CD4-positive, alpha-beta memory T cell (primary cell): ENCODE measurements at regions of chr18 and their contacts with region 1.

Region 1: DNA sequence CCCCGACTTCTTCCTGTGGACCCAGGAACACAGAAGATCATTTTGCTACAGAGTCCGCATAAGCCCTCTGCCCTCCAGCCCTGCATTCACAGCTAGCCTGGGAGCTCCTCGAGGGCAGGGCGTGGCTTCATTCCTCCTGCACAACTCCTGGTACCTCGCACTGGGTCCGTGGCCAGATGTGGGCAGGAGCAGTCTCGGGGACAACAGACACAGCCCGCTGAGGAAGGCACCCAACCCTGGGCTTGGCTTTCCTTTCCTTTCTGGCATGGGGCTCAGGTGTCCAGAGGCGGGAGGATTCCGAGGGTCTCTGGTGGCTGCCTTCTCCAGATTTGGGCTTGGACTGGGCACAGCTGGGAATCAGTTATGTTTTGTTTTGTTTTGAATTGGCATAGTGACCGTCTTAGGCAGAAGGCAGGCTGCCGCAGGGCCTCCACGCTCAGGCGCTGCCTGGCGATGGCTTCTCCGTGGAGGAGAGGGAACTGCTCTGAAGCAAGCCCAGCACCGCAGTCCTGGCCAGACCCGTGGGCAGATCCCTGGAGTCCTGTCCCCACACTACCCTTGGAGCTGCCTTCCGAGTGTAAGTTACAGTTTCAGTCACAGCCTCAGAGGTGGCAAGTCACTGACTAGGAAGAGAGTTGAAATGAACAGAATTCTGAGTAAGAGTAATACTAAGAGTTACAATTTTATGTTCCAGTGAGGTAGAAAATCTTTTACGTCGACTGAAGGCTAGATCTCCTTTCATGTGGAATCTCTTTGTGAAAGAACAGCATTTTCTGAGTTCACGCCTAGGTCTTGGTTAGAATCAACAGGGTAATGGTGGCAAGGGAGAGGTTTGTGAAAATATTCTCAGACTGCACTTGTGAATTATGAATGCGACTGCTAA is 47.9 kb downstream of the LDLRAD4 start:
- DNase-seq: peak in 4 of 5 donors; percentile 34 to 48 (median 42)
- H3K4me3 ChIP-seq: peak overlapping the region; percentile 6 to 57
- H3K4me3 Mint-ChIP-seq: peak overlapping the region; percentile 60 to 85 (median 76)
- H3K27ac ChIP-seq: peak overlapping the region; percentile 50
- H3K27ac Mint-ChIP-seq: peak overlapping the region; percentile 77 to 96 (median 93)
- H3K4me1 ChIP-seq: peaks cover 50% of the 10 kb centered on the region
- H3K4me1 Mint-ChIP-seq: peaks cover 33 to 65% (median 51%) of the 10 kb centered on the region in 4 donors
- H3K27me3 ChIP-seq: no peaks in the 10 kb centered on the region
- H3K27me3 Mint-ChIP-seq: peaks cover 0 to 7% of the 10 kb centered on the region in 2 donors

Region 2: DNA sequence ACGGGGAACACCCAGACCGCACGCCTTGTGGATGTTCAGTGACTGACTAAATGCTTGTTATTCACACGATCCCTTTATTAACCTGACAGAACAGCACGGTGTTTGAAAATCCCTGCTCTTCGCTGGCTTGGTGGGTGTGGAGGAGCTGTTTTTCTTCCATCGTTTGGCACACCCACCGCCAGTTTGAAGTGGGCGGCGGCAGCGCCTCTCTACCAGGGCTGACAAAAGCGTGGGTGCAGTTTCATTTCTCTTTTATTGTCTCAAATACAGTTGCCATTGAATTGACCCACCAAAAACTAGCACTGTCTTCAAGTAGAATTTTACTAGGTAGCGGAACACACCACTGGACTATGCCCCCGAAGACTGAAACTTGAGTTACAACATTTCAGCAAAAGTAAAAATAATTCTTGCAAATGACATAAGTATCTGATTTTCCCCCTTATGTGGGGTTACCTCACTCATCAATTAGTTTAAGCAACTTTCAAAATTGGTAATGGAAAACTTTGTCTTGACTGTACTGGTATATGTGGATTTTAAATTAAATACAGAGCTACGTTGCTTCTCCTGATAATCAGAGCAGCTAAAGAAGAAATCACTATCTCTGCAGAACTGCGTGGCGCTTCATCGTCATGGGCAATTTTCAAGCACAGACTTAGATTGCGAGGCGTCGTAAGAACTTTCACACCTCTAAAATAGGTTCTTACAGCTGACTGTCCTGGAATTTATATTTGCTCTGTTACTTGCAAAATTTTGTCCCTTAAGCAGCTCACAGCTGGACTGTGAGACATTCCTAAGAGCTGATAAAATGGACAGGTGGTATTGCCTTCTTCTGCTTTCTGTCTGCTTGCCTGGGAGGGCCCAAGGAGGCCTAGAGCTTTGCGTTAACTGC is 13.0 kb after region 1 on chr18:
- CTCF ChIA-PET with region 1: interaction called, 4 read pairs
- POLR2A ChIA-PET with region 1: interaction called, 23 read pairs
- intact Hi-C with region 1: loop called (anchors 1 kb)
- DNase-seq: peak in 3 of 5 donors; percentile 37 to 51 (median 41)
- H3K4me3 ChIP-seq: peak overlapping the region; percentile 7 to 46
- H3K4me3 Mint-ChIP-seq: peak overlapping the region; percentile 81 to 93 (median 88)
- H3K27ac ChIP-seq: peak overlapping the region; percentile 53
- H3K27ac Mint-ChIP-seq: peak overlapping the region; percentile 82 to 98 (median 94)
- H3K4me1 ChIP-seq: peaks cover 80% of the 10 kb centered on the region
- H3K4me1 Mint-ChIP-seq: peaks cover 48 to 88% (median 72%) of the 10 kb centered on the region in 4 donors
- H3K27me3 ChIP-seq: no peaks in the 10 kb centered on the region
- H3K27me3 Mint-ChIP-seq: peaks cover 0 to 2% of the 10 kb centered on the region in 2 donors

Region 3: GRCh38 chr18:13435596-13436327 is 169.3 kb after region 1 on chr18:
- CTCF ChIA-PET with region 1: no interaction called
- POLR2A ChIA-PET with region 1: no interaction called
- intact Hi-C with region 1: no loop called
- DNase-seq: peak in 2 of 5 donors; percentile 15 to 53
- H3K4me3 ChIP-seq: no peak overlapping the region
- H3K4me3 Mint-ChIP-seq: peak overlapping the region in 5 of 8 donors; percentile 30 to 89 (median 67)
- H3K27ac ChIP-seq: no peak overlapping the region
- H3K27ac Mint-ChIP-seq: peak overlapping the region; percentile 79 to 97 (median 95)
- H3K4me1 ChIP-seq: peaks cover 50% of the 10 kb centered on the region
- H3K4me1 Mint-ChIP-seq: peaks cover 36 to 58% (median 50%) of the 10 kb centered on the region in 4 donors
- H3K27me3 ChIP-seq: no peaks in the 10 kb centered on the region
- H3K27me3 Mint-ChIP-seq: no peaks in the 10 kb centered on the region

Region 4: DNA sequence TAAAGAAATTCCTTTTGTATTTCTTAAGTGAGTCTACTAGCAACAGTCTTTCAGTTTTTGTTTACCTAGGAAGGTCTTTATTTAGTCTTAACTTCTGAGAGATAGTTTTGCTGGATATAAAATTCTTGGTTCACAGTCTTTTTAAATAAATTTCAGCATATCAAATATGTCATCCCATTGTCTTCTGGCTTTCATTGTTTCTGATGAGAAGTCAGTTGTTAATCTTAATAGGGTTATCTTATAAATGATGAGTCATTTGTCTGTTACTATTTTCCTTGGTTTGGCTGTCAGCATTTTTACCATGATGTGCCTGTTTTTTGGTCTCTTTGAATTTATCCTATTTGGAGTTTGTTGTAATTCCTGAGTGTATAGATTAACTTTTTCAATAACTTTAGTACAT is 330.6 kb after region 1 on chr18:
- CTCF ChIA-PET with region 1: no interaction called
- POLR2A ChIA-PET with region 1: no interaction called
- intact Hi-C with region 1: no loop called
- DNase-seq: no peak
- H3K4me3 ChIP-seq: no peak overlapping the region
- H3K4me3 Mint-ChIP-seq: no peak overlapping the region
- H3K27ac ChIP-seq: no peak overlapping the region
- H3K27ac Mint-ChIP-seq: peak overlapping the region in 1 of 7 donors; percentile 10
- H3K4me1 ChIP-seq: peaks cover under 1% of the 10 kb centered on the region
- H3K4me1 Mint-ChIP-seq: peaks cover 3 to 11% (median 6%) of the 10 kb centered on the region in 4 donors
- H3K27me3 ChIP-seq: no peaks in the 10 kb centered on the region
- H3K27me3 Mint-ChIP-seq: no peaks in the 10 kb centered on the region